Right cardiac atrium (tissue), 5 donors: ENCODE measurements at regions of chr4 and their contacts with region 1.

Region 1: DNA sequence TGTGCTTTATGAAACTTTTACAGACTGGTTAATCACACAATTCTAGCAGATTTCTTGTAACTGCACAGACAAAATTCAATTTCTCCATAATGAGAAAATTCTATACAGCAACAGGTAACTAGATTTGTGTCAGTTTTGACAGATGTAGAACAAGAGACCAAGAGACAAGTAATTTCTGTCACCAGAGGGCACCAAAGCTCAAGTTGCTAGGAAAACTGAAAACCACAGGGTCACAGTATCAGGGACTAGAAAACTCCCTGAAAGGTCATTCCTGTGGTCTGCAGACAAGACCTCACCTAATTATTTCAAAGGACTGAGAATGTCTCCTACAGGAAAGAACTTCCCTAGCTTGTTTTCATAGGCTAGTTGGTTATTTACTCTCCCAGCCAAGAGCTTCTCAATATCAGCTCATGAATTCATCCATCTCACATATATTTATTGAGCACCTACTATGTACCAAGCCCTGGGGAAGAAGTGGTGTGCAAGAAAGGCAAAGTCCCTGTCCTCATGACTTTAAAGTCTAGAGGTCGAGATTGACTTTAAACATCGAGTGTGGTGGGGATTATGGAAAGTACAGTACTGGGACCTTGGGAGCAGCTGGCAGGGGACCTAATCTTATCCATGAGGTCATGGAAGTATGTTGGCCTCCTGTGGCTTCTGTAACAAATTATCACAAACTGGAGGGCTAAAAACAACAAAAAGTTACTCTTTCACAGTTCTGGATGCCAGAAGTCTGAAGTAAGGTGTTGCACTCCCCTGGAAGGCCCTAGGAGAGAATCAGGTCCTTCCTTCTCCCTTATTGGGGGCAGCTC is 47.8 kb upstream of the SETD7 start:
- DNase-seq: no peak
- ATAC-seq: peak; percentile 43 to 58
- H3K4me3 ChIP-seq: no peak overlapping the region
- H3K27ac ChIP-seq: no peak overlapping the region
- H3K4me1 ChIP-seq: no peaks in the 10 kb centered on the region
- H3K27me3 ChIP-seq: no peaks in the 10 kb centered on the region

Region 2: DNA sequence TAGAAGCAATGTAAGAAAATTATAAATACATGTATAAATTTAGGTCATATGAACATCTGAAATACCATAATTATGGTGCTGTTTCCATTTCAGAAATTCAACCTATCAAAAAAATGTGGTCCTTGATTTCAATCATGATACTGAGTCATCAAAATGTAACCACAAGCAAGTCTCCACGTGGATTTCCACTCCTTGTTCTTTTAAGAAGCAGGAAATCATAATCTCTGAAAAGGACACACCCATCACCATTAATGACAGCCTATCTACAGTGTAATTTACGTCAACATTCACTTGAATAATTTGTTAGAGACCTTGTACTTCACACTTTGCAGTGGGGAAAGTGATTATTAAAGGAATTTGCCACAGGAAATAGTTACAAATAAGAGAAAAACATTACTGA is 1344.0 kb before region 1 on chr4:
- intact Hi-C with region 1: no loop called
- DNase-seq: no peak
- ATAC-seq: no peak
- H3K4me3 ChIP-seq: no peak overlapping the region
- H3K27ac ChIP-seq: no peak overlapping the region
- H3K4me1 ChIP-seq: no peaks in the 10 kb centered on the region
- H3K27me3 ChIP-seq: no peaks in the 10 kb centered on the region

Region 3: DNA sequence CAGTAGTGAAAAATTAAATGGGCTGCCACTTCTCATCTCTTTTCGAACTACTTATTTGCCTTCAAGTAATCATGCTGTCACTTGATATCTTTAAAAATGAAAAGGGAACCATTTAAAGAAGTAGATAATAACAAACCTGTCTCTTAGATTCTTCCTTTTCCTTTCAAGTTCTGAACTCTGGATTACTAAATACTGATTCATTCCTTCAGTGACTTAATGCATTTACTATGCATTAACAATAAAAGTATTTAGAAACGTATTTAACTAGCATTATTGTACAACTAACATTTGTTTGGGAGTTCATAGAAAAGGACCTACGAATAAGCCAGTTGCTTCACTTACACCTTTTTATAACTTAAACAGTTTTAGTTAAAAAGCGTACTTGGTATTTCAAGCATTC is 211.0 kb before region 1 on chr4:
- intact Hi-C with region 1: no loop called
- DNase-seq: no peak
- ATAC-seq: no peak
- H3K4me3 ChIP-seq: no peak overlapping the region
- H3K27ac ChIP-seq: no peak overlapping the region
- H3K4me1 ChIP-seq: no peaks in the 10 kb centered on the region
- H3K27me3 ChIP-seq: no peaks in the 10 kb centered on the region

Region 4: GRCh38 chr4:139550724-139551429 is 52.9 kb before region 1 on chr4:
- intact Hi-C with region 1: no loop called
- DNase-seq: peak; percentile 53 to 74 (median 71)
- ATAC-seq: peak; percentile 36 to 39
- H3K4me3 ChIP-seq: no peak overlapping the region
- H3K27ac ChIP-seq: no peak overlapping the region
- H3K4me1 ChIP-seq: peaks cover 20% of the 10 kb centered on the region
- H3K27me3 ChIP-seq: no peaks in the 10 kb centered on the region

Region 5: GRCh38 chr4:139651282-139652194 is 47.8 kb after region 1 on chr4:
- intact Hi-C with region 1: loop called in 3 of 4 experiments (anchors 2 to 5 kb)
- DNase-seq: peak; percentile 88 to 93 (median 89)
- ATAC-seq: peak; percentile 87 to 89
- H3K4me3 ChIP-seq: no peak overlapping the region
- H3K27ac ChIP-seq: no peak overlapping the region
- H3K4me1 ChIP-seq: peaks cover 2% of the 10 kb centered on the region
- H3K27me3 ChIP-seq: no peaks in the 10 kb centered on the region

Region 6: DNA sequence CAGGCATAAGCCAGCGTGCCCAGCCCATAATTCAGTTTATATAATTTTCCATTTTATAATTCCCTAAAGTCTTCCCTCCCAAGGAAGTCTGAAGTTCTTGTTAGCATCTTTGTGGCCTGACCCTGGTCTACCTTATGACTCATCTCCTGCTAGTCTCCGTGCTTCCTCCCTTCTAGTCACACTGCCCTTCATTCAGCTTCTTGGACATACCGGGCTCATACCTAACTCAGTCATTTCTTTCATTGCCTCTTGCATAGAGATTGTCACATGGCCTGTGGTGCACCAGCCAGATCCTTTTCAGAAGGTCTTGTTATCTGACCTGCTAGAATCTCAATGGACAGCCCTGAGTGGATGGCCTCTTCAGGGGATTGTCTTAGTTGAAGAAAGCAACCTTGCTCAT is 573.0 kb after region 1 on chr4:
- intact Hi-C with region 1: no loop called
- DNase-seq: no peak
- ATAC-seq: no peak
- H3K4me3 ChIP-seq: no peak overlapping the region
- H3K27ac ChIP-seq: no peak overlapping the region
- H3K4me1 ChIP-seq: no peaks in the 10 kb centered on the region
- H3K27me3 ChIP-seq: no peaks in the 10 kb centered on the region